Common myeloid progenitor, CD34-positive (primary cell): ENCODE measurements at regions of chr11 and their contacts with region 1.

Region 1: GRCh38 chr11:16741473-16741872 is 3.0 kb downstream of the C11orf58 start:
- DNase-seq: no peak
- H3K4me3 ChIP-seq: peak overlapping the region in 2 of 7 experiments; percentile 18 to 31
- H3K27ac ChIP-seq: no peak overlapping the region
- H3K4me1 ChIP-seq: peaks cover 7 to 16% (median 12%) of the 10 kb centered on the region in 4 experiments
- H3K27me3 ChIP-seq: no peaks in the 10 kb centered on the region

Region 2: DNA sequence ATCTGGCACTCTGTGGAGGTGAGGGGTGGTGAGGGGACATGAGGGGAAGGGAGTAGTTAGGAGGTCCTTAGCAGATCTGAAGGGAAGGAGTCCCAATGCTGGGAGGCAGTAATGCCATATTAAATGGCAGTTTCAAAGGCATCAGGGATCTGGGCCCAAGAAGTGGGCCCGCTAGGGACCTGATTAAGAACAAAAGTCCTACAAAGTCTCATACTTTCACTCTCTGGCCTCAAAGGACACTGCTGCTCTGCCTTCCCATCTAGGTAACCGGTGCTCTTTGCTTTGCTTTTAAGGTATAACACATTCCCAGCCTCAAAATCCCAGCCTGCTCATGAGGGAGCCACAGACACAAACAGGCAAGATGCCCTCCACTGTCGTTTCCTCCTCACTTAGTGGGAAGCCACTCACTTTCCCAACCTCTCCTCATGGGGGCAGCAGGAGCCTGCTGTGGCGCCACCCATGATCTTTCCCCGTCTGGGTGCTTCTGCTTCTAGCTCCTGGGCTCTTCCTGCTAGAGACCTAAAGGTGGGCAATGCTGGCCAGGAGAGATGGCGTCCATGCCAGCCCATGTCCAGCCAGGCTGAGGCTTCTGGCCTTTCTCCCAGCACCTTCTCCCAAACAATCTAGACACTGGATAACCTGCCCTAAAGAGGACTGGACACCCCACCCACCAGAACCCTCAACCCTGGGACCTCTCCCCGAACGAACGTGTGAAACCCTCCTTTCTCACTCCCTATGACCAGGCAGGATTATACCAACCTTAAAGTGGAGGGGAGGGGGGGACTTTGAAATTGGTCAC is 204.4 kb after region 1 on chr11:
- CTCF ChIA-PET with region 1: no interaction called
- POLR2A ChIA-PET with region 1: interaction called, 10 read pairs
- DNase-seq: peak; percentile 54 to 68 (median 63)
- H3K4me3 ChIP-seq: no peak overlapping the region
- H3K27ac ChIP-seq: no peak overlapping the region
- H3K4me1 ChIP-seq: peaks cover 0 to 1% (median 0%) of the 10 kb centered on the region in 4 experiments
- H3K27me3 ChIP-seq: no peaks in the 10 kb centered on the region

Region 3: GRCh38 chr11:16993495-16993894 is 252.0 kb after region 1 on chr11:
- CTCF ChIA-PET with region 1: no interaction called
- POLR2A ChIA-PET with region 1: no interaction called
- DNase-seq: no peak
- H3K4me3 ChIP-seq: no peak overlapping the region
- H3K27ac ChIP-seq: no peak overlapping the region
- H3K4me1 ChIP-seq: no peaks in the 10 kb centered on the region
- H3K27me3 ChIP-seq: no peaks in the 10 kb centered on the region